A673 (cell line): ENCODE measurements at regions of chr21 and their contacts with region 1.

Region 1: DNA sequence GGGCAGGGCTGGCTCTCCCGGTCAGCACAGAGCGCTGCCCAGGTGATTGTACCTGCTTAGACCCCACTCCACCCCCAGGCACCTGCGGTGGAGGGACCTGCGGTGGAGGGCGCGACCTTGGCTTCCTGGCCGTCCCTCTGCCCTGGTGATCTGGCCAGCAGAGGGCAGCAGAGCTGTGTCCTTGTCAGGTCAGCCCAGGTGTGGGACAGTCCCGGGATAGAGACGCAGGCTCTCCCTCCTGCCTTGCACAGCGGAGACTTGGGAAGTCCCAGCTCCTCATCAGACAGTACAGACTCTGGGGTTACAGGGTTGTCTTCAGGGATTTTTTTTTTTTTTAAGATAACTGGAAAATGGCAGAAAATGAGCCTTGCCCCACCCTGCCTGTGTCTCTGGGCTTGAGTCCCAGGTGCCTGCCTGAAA is 10.0 kb downstream of the SLX9 start:
- DNase-seq: no peak
- H3K4me3 ChIP-seq: no peak overlapping the region
- H3K27ac ChIP-seq: no peak overlapping the region
- H3K4me1 ChIP-seq: peaks cover 13% of the 10 kb centered on the region
- H3K27me3 ChIP-seq: no peaks in the 10 kb centered on the region
- CTCF ChIP-seq: peak; percentile 81

Region 2: DNA sequence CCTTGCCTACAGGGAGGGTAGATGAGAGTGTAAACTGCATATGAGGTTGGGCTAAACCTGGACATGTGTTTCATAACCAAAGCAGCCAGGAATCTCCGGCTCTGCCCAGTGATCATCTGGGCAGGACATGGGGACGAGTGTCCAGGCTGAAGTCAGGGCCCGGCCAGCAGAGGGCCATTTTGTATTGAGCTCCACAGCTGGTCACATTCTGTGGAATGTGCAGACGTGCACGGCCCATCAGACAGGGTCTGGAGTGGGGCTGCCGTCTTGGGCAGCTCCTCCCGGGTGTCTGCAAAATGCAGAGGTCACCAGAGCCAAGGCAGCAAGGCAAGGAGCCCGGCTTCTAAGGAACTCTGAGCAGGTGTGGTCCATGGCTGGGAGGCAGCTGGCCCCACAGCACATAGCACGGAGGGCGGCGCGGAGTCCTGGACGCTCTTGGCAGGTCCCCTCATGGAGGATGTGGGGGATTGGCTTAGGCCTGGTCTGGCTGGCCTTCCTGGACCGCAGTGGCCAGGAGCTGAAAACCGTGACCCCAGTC is 488.3 kb before region 1 on chr21:
- CTCF ChIA-PET with region 1: no interaction called
- POLR2A ChIA-PET with region 1: no interaction called
- intact Hi-C with region 1: no loop called
- DNase-seq: no peak
- H3K4me3 ChIP-seq: no peak overlapping the region
- H3K27ac ChIP-seq: no peak overlapping the region
- H3K4me1 ChIP-seq: no peaks in the 10 kb centered on the region
- H3K27me3 ChIP-seq: no peaks in the 10 kb centered on the region
- CTCF ChIP-seq: no peak

Region 3: GRCh38 chr21:44939532-44940115 is 10.2 kb before region 1 on chr21 and contains the start of gene SLX9:
- CTCF ChIA-PET with region 1: no interaction called
- POLR2A ChIA-PET with region 1: interaction called, 10 read pairs
- intact Hi-C with region 1: no loop called
- DNase-seq: peak; percentile 94
- H3K4me3 ChIP-seq: peak within 1 kb of the TSS; percentile 71
- H3K27ac ChIP-seq: peak within 1 kb of the TSS; percentile 100
- H3K4me1 ChIP-seq: peaks cover 21% of the 10 kb centered on the region
- H3K27me3 ChIP-seq: no peaks in the 10 kb centered on the region
- CTCF ChIP-seq: no peak
- total RNA-seq, gene SLX9: 114 and 115 TPM in 2 replicates

Region 4: DNA sequence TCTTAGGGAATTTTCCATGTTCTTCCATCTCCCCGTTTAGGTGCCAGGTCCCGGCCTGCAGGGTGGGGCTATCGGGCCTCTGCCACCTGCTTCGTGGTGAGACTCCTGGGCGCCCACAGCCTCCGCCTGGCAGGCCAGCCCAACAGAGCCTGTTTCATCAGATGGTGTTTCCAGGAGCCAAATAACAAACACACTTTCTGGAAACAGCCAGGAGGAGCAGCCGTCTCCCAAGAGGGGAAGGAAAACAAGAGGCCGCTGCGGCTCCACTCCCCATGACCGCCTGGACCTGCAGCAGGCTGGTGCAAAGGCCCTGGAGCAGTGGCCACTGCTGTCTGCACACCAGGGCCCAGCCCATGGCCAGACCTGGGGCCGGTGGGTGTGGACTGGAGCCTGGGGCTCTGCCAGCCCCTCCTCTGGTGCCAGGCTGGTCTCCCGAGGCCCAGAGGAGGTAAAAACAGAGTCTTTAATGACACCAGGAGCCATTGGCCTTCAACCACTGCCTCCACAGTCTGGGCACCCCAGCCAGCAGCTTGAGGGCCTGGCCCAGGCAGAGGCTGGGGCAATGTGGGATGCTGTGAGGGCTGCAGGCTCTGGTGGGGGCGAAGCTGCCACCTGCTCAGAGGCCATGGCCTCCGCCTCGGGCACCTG is 45.0 kb after region 1 on chr21:
- CTCF ChIA-PET with region 1: no interaction called
- POLR2A ChIA-PET with region 1: no interaction called
- intact Hi-C with region 1: no loop called
- DNase-seq: no peak
- H3K4me3 ChIP-seq: no peak overlapping the region
- H3K27ac ChIP-seq: no peak overlapping the region
- H3K4me1 ChIP-seq: no peaks in the 10 kb centered on the region
- H3K27me3 ChIP-seq: no peaks in the 10 kb centered on the region
- CTCF ChIP-seq: no peak

Region 5: DNA sequence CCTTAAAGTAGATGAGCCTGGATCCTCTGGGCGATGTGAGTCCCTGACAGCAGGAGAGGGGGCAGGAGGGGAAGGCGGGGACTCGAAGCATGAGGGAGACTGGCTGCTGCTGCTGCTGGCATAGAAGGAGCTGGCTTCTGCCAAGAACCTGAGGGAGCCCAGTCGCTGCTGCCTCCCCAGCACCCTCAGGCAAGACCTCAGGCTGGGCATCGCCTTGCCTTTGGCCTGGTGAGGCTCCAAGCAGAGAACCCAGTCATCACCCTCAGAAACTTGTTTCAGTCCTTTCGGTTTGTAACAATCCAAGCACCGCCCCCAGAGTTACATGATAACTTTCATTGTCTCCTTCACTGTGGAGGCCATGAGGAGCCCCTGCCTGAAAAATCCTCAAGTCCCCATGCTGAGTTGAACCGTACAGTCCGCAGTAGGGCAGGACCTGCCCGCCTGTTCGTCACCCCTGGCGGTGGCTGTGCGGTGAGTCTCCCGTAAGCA is 299.1 kb after region 1 on chr21:
- CTCF ChIA-PET with region 1: no interaction called
- POLR2A ChIA-PET with region 1: no interaction called
- intact Hi-C with region 1: no loop called
- DNase-seq: peak; percentile 32
- H3K4me3 ChIP-seq: peak overlapping the region; percentile 21
- H3K27ac ChIP-seq: no peak overlapping the region
- H3K4me1 ChIP-seq: no peaks in the 10 kb centered on the region
- H3K27me3 ChIP-seq: no peaks in the 10 kb centered on the region
- CTCF ChIP-seq: no peak